ENCODE measurements at regions of chr2 and their contacts with region 1.

Region 1: GRCh38 chr2:96265840-96266679 is at the starts of genes CIAO1 and TMEM127:
- DNase-seq: peak; percentile 96 to 99 (median 97)
- ATAC-seq: peak; percentile 97
- H3K4me3 ChIP-seq: peak within 1 kb of the TSS; percentile 86
- H3K4me3 Mint-ChIP-seq: peak within 1 kb of the TSS; percentile 86 to 100 (median 96)
- H3K27ac ChIP-seq: peak within 1 kb of the TSS; percentile 96
- H3K27ac Mint-ChIP-seq: peak within 1 kb of the TSS; percentile 87 to 97 (median 96)
- H3K4me1 ChIP-seq: peaks cover 31 to 37% of the 10 kb centered on the region in 2 donors
- H3K4me1 Mint-ChIP-seq: peaks cover 38 to 61% (median 46%) of the 10 kb centered on the region in 7 donors
- H3K27me3 ChIP-seq: no peaks in the 10 kb centered on the region
- H3K27me3 Mint-ChIP-seq: no peaks in the 10 kb centered on the region
- total RNA-seq, gene CIAO1: 62.1 to 85.3 (median 71.6) TPM
- total RNA-seq, gene TMEM127: 33.7 to 69.0 (median 40.4) TPM

Region 2: DNA sequence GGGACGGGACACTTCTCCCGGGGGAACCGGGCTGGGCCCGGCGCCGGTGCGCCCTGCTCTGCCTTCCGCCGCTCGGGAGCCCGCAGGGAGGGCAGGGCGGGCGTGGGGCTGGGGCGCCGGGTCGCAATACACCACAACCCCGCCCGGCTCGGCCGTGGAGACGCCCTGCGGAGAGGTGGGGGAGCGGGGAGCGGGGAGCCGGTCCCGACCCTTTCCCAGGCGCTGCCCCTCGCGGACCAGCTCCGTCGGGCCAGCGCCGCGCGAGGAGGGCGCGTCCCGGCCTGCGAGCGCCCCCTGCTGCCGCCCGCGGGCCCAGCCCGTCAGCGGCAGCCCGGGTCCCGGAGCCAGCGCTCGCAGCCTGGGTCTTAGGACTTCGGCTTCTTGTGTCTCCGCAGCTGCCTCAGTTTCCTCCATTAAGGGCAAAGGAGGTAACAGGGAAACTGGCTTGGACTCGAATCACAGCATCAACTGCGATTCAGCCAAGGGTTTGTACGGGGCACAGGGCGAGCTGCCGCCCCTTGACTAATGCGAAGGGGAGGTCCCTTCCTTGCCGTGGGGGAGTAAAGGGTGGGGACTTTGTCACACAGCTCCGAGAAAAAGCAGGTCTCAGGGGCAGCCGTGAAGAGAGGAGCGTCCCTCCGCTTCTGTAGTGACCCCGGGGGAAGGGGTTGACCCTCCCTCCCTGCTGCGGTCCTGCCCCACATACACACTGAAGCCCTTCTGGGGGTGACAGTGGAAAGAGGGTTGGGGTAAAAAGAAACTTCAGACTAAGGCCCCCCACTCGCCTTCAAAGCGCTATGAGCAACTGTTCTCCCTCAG is 149.0 kb before region 1 on chr2:
- CTCF ChIA-PET with region 1: no interaction called
- POLR2A ChIA-PET with region 1: no interaction called
- intact Hi-C with region 1: loop called in 1 of 2 experiments (anchors 1 kb)
- DNase-seq: peak; percentile 36 to 83 (median 70)
- ATAC-seq: peak; percentile 85
- H3K4me3 ChIP-seq: peak overlapping the region; percentile 41
- H3K4me3 Mint-ChIP-seq: peak overlapping the region; percentile 28 to 79 (median 62)
- H3K27ac ChIP-seq: peak overlapping the region; percentile 55
- H3K27ac Mint-ChIP-seq: peak overlapping the region in 1 of 9 donors; percentile 14
- H3K4me1 ChIP-seq: peaks cover 5 to 8% of the 10 kb centered on the region in 2 donors
- H3K4me1 Mint-ChIP-seq: peaks cover 4 to 19% (median 10%) of the 10 kb centered on the region in 7 donors
- H3K27me3 ChIP-seq: no peaks in the 10 kb centered on the region
- H3K27me3 Mint-ChIP-seq: peaks cover 23 to 50% (median 32%) of the 10 kb centered on the region in 5 donors

Region 3: GRCh38 chr2:96208143-96209010 is 57.7 kb before region 1 on chr2 and contains the start of gene STARD7:
- CTCF ChIA-PET with region 1: interaction called, 4 read pairs
- POLR2A ChIA-PET with region 1: interaction called, 32 read pairs
- intact Hi-C with region 1: loop called (anchors 1 kb)
- DNase-seq: peak; percentile 93 to 97 (median 95)
- ATAC-seq: peak; percentile 92
- H3K4me3 ChIP-seq: peak within 1 kb of the TSS; percentile 83
- H3K4me3 Mint-ChIP-seq: peak within 1 kb of the TSS; percentile 88 to 100 (median 95)
- H3K27ac ChIP-seq: peak within 1 kb of the TSS; percentile 87
- H3K27ac Mint-ChIP-seq: peak within 1 kb of the TSS; percentile 86 to 99 (median 93)
- H3K4me1 ChIP-seq: peaks cover 30 to 37% of the 10 kb centered on the region in 2 donors
- H3K4me1 Mint-ChIP-seq: peaks cover 37 to 57% (median 51%) of the 10 kb centered on the region in 7 donors
- H3K27me3 ChIP-seq: no peaks in the 10 kb centered on the region
- H3K27me3 Mint-ChIP-seq: no peaks in the 10 kb centered on the region
- total RNA-seq, gene STARD7: 56.5 to 133 (median 74.2) TPM

Region 4: DNA sequence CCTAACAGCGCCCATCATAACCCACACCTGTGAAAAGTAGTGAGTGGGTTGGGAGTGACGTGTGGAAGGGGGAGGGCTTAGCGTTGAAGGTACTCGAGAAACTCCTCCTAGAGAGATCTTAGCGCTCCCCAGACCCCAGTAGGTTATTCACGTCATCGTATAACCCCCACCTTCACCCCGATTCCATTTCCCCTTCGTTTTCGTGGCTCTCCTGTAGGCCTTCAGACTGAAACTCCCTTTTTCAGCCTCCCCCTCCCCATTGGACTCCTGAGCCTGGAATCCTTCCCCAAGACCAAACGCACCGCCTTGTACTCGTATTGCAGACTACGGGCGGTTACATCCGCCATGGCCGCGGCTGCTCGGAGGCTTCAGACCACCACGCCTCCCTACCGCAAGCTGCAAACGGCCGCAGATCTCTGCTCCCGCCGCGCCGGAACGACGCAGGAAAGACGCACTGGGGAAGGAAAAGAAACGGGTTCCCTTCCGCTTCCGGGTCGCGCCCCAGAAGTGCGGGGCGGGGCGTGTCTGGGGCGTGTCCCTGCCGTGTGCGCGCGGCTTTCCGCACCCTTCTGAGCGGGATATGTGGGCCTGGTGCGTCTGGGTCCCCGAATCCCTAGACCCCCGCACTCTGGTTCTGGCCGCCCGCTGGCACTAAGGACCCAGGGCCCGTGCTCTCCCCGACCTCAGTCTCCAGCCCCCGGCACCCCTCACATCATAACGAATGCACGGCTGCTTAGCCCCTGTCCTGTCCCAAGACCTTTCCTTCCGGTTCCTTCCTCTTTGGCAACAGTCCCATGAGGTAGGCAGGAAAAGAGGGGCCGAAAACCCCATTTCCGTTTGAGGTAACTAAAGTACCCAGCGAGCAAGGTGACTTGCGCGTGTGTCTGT is 39.3 kb after region 1 on chr2 and contains the start of gene SNRNP200:
- CTCF ChIA-PET with region 1: interaction called, 3 read pairs
- POLR2A ChIA-PET with region 1: interaction called, 14 read pairs
- intact Hi-C with region 1: loop called (anchors 1 kb)
- DNase-seq: peak; percentile 77 to 92 (median 90)
- ATAC-seq: peak; percentile 96
- H3K4me3 ChIP-seq: peak within 1 kb of the TSS; percentile 85
- H3K4me3 Mint-ChIP-seq: peak within 1 kb of the TSS; percentile 94 to 100 (median 99)
- H3K27ac ChIP-seq: peak within 1 kb of the TSS; percentile 94
- H3K27ac Mint-ChIP-seq: peak within 1 kb of the TSS; percentile 97 to 100 (median 99)
- H3K4me1 ChIP-seq: peaks cover 30 to 41% of the 10 kb centered on the region in 2 donors
- H3K4me1 Mint-ChIP-seq: peaks cover 41 to 61% (median 58%) of the 10 kb centered on the region in 7 donors
- H3K27me3 ChIP-seq: no peaks in the 10 kb centered on the region
- H3K27me3 Mint-ChIP-seq: no peaks in the 10 kb centered on the region
- total RNA-seq, gene SNRNP200: 165 to 255 (median 212) TPM

Region 5: GRCh38 chr2:96336104-96336775 is 70.2 kb after region 1 on chr2:
- CTCF ChIA-PET with region 1: no interaction called
- POLR2A ChIA-PET with region 1: no interaction called
- intact Hi-C with region 1: loop called (anchors 1 to 2 kb)
- DNase-seq: no peak
- ATAC-seq: no peak
- H3K4me3 ChIP-seq: peak overlapping the region; percentile 87
- H3K4me3 Mint-ChIP-seq: peak overlapping the region; percentile 59 to 91 (median 82)
- H3K27ac ChIP-seq: peak overlapping the region; percentile 91
- H3K27ac Mint-ChIP-seq: peak overlapping the region; percentile 29 to 92 (median 77)
- H3K4me1 ChIP-seq: peaks cover 3 to 20% of the 10 kb centered on the region in 2 donors
- H3K4me1 Mint-ChIP-seq: peaks cover 18 to 62% (median 25%) of the 10 kb centered on the region in 7 donors
- H3K27me3 ChIP-seq: no peaks in the 10 kb centered on the region
- H3K27me3 Mint-ChIP-seq: no peaks in the 10 kb centered on the region

Region 6: GRCh38 chr2:96679848-96680247 is 413.8 kb after region 1 on chr2:
- CTCF ChIA-PET with region 1: no interaction called
- POLR2A ChIA-PET with region 1: no interaction called
- intact Hi-C with region 1: no loop called
- DNase-seq: no peak
- ATAC-seq: no peak
- H3K4me3 ChIP-seq: no peak overlapping the region
- H3K4me3 Mint-ChIP-seq: no peak overlapping the region
- H3K27ac ChIP-seq: no peak overlapping the region
- H3K27ac Mint-ChIP-seq: no peak overlapping the region
- H3K4me1 ChIP-seq: no peaks in the 10 kb centered on the region
- H3K4me1 Mint-ChIP-seq: peaks cover 0 to 2% (median 0%) of the 10 kb centered on the region in 7 donors
- H3K27me3 ChIP-seq: peaks cover 0 to 4% of the 10 kb centered on the region in 2 donors
- H3K27me3 Mint-ChIP-seq: peaks cover 4 to 16% (median 5%) of the 10 kb centered on the region in 5 donors

Region 7: GRCh38 chr2:96739633-96740428 is 473.8 kb after region 1 on chr2 and contains the start of gene LMAN2L:
- CTCF ChIA-PET with region 1: no interaction called
- POLR2A ChIA-PET with region 1: no interaction called
- intact Hi-C with region 1: loop called (anchors 1 kb)
- DNase-seq: peak; percentile 78 to 99 (median 94)
- ATAC-seq: peak; percentile 100
- H3K4me3 ChIP-seq: peak within 1 kb of the TSS; percentile 70
- H3K4me3 Mint-ChIP-seq: peak within 1 kb of the TSS; percentile 92 to 100 (median 97)
- H3K27ac ChIP-seq: peak within 1 kb of the TSS; percentile 75
- H3K27ac Mint-ChIP-seq: peak within 1 kb of the TSS; percentile 83 to 96 (median 90)
- H3K4me1 ChIP-seq: peaks cover 6% of the 10 kb centered on the region in 2 donors
- H3K4me1 Mint-ChIP-seq: peaks cover 20 to 48% (median 37%) of the 10 kb centered on the region in 7 donors
- H3K27me3 ChIP-seq: no peaks in the 10 kb centered on the region
- H3K27me3 Mint-ChIP-seq: no peaks in the 10 kb centered on the region
- total RNA-seq, gene LMAN2L: 5.0 to 10.9 (median 9.2) TPM